GM10248 (cell line): ENCODE measurements at regions of chr15 and their contacts with region 1.

Region 1: DNA sequence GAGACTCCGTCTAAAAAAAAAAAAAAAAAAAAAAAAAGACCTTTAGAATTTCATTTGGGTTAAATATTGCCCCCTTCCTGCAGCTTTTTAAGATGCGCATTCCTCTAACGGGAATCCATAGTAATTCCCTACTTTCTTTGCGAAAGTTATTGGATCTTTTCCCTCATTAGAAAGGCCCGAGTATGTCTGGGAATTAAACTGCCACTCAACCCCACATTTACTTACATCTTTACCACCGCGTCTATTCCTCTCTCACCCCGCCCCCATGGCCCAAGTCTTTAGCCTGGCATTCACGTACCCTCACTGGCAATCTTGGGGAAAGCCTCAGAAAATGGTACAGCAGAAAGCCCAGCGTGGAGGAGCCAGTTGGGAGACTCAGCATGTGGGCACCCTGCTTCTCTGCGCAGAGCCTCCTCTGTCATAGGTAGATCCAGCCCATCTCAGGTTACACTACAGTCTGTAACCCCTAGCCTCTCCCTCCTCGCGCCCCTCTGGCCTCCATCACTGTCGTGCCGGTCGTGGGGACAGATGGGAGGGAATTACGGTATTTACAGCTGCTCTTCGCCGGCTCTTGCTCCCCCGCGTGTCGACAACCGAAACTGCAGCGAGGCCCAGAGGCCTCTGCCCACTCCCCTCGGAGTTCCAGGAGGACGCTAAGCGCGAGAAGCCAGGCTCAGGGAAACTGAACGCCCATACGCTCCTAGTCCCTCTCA is 6.4 kb upstream of the ANKDD1A start:
- DNase-seq: peak; percentile 85
- CTCF ChIP-seq: peak; percentile 93

Region 2: GRCh38 chr15:64825431-64826294 is 79.6 kb before region 1 on chr15 and contains the start of gene PIF1:
- CTCF ChIA-PET with region 1: interaction called, 10 read pairs
- POLR2A ChIA-PET with region 1: interaction called, 4 read pairs
- DNase-seq: peak; percentile 95
- CTCF ChIP-seq: no peak

Region 3: DNA sequence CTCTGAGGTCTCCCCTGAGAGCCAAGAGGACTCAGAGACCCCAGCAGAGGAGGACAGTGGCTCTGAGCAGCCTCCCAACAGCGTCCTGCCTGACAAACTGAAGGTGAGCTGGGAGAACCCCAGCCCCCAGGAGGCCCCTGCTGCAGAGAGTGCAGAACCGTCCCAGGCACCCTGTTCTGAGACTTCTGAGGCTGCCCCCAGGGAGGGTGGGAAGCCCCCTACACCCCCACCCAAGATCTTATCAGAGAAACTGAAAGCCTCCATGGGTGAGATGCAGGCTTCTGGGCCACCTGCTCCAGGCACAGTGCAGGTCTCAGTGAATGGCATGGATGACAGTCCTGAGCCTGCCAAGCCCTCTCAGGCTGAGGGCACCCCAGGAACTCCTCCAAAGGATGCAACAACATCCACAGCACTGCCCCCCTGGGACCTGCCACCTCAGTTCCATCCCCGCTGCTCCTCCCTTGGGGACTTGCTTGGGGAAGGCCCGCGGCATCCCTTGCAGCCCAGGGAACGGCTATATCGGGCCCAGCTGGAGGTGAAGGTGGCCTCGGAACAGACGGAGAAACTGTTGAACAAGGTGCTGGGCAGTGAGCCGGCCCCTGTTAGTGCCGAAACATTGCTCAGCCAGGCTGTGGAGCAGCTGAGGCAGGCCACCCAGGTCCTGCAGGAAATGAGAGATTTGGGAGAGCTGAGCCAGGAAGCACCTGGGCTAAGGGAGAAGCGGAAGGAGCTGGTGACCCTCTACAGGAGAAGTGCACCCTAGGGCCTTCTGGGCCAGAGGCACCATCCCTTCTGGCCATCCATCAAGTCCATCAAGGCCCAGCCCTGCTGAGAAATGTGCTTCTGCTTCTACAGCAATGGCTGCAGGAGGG is 39.9 kb before region 1 on chr15:
- CTCF ChIA-PET with region 1: interaction called, 11 read pairs
- POLR2A ChIA-PET with region 1: no interaction called
- DNase-seq: peak; percentile 51
- CTCF ChIP-seq: no peak

Region 4: GRCh38 chr15:64883997-64884511 is 21.2 kb before region 1 on chr15:
- CTCF ChIA-PET with region 1: interaction called, 13 read pairs
- POLR2A ChIA-PET with region 1: no interaction called
- DNase-seq: peak; percentile 70
- CTCF ChIP-seq: no peak

Region 5: DNA sequence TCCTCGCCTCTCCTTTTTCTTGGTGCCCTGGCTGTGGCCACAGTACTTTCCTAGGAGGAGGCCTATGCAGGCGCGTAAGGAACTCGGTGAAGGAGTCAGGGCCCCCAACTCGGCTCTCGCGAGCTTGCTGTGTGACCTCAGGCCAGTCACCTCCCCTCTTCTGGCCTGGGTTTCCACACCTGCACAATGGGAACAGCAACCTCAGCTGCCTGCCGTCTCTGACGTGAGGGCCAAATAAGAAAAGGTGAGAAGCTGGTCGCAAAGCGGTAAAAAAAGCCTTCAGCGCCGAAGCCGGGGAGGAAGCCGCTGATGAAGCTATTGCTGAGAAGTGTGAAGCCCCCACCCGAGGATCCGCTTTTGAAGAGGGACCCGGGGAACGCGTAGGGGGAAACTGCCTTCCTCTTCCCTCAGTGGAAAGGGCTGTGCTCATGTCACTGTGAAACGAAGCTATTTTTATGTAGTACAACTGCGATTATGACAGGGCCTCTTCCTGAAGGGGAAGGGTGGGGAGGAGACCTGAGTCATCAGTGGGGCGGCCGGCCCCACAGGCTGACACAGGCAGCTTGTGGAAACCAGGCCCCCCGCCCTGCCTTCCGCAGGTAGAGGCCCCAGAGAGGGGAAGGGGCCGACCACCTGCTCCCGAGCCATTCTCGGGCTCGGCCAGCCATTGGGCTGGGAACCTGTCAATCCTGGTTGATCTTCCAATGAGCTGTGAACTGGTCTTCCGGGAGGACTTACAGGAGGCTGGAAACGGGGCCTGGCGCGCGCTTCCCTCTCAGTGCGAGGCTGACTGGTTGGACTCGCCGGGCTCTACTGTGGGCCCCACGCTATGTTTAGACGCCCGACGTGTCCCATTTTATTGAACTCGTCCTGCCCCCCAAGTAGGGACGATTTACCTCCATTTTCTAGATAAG is 11.5 kb before region 1 on chr15:
- CTCF ChIA-PET with region 1: interaction called, 50 read pairs
- POLR2A ChIA-PET with region 1: no interaction called
- DNase-seq: peak; percentile 94
- CTCF ChIP-seq: no peak

Region 6: DNA sequence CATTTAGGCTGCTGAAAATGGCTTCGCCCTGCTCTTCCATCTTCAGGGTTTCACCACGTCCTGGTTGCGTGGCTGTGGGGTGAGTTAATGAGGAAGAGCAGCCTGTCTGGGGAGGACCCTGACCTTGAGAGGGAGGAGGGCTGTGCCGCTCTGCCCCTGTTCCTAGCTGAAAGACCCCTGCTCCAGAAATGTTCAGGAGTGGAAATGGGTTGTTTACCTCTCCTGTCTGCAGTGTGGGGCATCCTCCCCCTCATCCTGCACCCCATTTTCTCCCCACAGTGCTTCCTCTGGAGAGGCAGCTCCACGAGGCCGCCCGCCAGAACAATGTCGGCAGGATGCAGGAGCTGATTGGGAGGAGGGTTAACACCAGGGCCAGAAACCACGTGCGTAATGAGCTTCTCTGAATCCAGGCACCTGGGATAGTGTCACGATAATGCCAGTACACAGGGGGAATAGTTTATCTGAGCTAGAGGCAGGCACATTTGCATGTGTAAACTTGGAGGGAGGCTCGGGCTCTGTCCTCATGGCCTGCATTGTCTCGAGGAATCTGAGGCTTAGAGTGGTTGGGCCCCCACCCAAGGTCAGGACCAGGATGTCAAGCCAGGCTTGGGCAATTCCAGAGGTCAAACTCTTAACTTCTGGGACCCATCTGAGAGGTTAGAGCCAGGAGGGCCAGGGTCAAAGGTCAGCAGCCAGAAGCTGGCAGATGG is 10.4 kb after region 1 on chr15:
- CTCF ChIA-PET with region 1: interaction called, 18 read pairs
- POLR2A ChIA-PET with region 1: no interaction called
- DNase-seq: no peak
- CTCF ChIP-seq: no peak

Region 7: DNA sequence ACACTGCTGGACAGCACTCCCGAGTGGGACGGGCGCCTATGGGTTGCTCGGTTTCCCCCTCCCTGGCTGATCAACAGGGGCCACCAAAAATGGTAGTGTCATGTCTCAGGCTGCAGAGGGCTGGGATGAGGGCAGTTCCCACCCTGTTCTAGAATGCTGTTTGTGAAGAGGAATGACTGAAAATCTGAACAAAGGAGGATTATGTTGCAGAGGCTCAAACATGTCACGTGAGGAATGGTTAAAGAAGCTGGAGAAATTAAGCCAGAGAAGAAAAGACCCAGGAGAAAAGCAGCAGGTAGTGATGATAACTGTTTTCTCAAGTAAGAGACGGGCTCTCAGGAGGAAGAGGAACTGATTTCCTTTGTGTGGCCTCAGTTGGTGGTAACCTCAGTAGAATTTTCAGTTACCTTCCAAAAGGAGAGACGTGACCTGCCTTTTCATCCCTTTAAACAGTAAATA is 74.0 kb after region 1 on chr15:
- CTCF ChIA-PET with region 1: no interaction called
- POLR2A ChIA-PET with region 1: no interaction called
- DNase-seq: no peak
- CTCF ChIP-seq: no peak

Region 8: GRCh38 chr15:65101411-65101890 is 196.2 kb after region 1 on chr15:
- CTCF ChIA-PET with region 1: no interaction called
- POLR2A ChIA-PET with region 1: no interaction called
- DNase-seq: peak; percentile 69
- CTCF ChIP-seq: peak; percentile 46